ENCODE measurements at regions of chr10 and their contacts with region 1.

Region 1: DNA sequence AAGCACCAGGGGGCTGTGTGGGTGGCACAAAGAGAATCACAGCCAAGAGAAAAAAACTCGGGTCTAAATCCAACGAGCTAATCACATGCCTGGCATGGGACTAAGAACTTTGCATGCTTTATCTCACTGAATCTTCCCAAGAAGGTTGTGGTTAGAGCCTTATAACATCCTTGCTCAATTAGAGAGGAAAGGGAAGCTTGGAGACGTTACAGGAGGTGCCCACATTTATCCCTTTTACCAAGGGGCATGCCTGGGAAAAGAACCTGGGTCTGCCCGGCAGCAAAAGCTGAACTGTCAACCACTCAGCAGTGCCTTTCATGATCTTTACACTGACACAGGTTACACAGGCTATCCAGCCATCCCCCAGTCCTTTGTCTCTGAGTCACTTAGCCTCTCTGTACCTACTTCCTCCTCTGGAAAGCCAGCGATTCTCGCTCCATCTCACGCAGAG is 190.1 kb downstream of the PRPF18 start:
- DNase-seq: no peak
- H3K4me3 Mint-ChIP-seq: no peak overlapping the region
- H3K27ac Mint-ChIP-seq: no peak overlapping the region
- H3K4me1 Mint-ChIP-seq: no peaks in the 10 kb centered on the region
- H3K27me3 Mint-ChIP-seq: peaks cover 18% of the 10 kb centered on the region

Region 2: GRCh38 chr10:13371897-13372470 is 404.9 kb before region 1 on chr10:
- intact Hi-C with region 1: loop called (anchors 1 kb)
- DNase-seq: peak; percentile 61
- H3K4me3 Mint-ChIP-seq: no peak overlapping the region
- H3K27ac Mint-ChIP-seq: no peak overlapping the region
- H3K4me1 Mint-ChIP-seq: no peaks in the 10 kb centered on the region
- H3K27me3 Mint-ChIP-seq: peaks cover 3% of the 10 kb centered on the region

Region 3: DNA sequence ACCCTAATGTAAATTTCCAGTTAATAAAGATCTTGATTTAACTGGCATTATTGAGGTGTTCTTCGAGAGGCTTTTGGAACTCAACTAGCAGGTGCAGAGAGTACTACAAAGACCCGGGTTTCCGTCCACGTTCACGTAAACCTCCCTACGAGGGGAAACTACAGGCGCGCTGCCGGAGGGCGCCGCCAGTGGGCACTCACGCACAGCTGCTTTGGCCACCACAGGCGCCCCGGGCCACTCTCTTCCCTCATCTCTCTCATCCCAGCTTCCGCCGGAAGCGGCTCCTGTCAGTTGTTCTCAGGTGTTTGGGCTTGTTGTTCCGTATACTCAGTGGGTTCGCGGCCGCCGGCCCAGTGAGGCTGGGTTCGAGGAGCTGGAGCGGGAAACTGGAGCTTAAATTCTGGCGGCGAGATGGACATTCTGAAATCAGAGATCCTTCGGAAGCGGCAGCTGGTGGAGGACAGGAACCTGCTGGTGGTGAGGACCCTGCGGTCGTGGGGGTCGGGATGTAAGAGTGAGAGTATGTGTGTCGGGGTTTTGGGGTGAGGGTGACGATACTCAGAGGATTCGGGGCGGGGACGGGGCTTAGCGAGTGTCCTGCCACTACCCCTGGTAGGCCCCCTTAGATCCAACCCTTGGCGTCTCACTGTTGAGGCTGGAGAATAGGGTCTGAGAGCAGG is 190.1 kb before region 1 on chr10 and contains the start of gene PRPF18:
- intact Hi-C with region 1: loop called (anchors 2 kb)
- DNase-seq: peak; percentile 89
- H3K4me3 Mint-ChIP-seq: peak within 1 kb of the TSS; percentile 100
- H3K27ac Mint-ChIP-seq: peak within 1 kb of the TSS; percentile 97
- H3K4me1 Mint-ChIP-seq: peaks cover 20% of the 10 kb centered on the region
- H3K27me3 Mint-ChIP-seq: peaks cover 6% of the 10 kb centered on the region
- total RNA-seq, gene PRPF18: 20.6 and 22.9 TPM in 2 replicates

Region 4: DNA sequence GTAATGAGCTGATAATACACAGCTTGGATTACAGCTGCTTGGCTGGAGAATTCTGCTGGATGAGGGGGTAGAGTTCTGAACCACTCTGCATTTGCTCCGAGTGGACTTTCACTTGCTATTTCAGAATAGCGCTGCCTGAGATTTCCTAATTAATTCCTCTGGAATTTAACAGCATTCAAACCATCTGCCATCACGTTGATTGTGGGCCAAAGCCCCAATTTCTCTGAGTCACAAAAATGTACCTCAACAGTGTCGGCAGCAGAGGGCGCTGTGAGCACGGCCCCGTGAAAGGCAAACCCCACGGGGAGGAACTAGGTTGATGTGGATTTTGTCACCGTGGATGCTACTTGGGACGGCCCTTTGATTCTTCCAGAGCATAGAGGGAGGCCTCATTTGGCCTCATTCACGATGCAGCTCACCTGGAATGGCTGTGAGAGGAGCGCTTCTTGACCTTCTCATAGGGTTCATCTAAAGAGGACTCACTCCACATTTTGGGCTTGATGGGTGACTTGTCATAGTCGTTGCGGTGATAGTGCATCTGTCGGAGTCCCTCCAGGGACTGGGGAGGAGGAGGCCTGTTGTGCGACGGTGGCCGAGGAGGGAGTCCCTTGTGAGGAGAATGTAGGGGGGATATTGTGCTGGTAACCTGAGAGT is 116.9 kb before region 1 on chr10:
- intact Hi-C with region 1: loop called (anchors 1 kb)
- DNase-seq: peak; percentile 50
- H3K4me3 Mint-ChIP-seq: no peak overlapping the region
- H3K27ac Mint-ChIP-seq: no peak overlapping the region
- H3K4me1 Mint-ChIP-seq: peaks cover 4% of the 10 kb centered on the region
- H3K27me3 Mint-ChIP-seq: no peaks in the 10 kb centered on the region

Region 5: GRCh38 chr10:13758312-13758711 is 18.6 kb before region 1 on chr10:
- intact Hi-C with region 1: no loop called
- DNase-seq: no peak
- H3K4me3 Mint-ChIP-seq: no peak overlapping the region
- H3K27ac Mint-ChIP-seq: no peak overlapping the region
- H3K4me1 Mint-ChIP-seq: peaks cover 9% of the 10 kb centered on the region
- H3K27me3 Mint-ChIP-seq: peaks cover 22% of the 10 kb centered on the region

Region 6: GRCh38 chr10:13877154-13877909 is 100.4 kb after region 1 on chr10:
- intact Hi-C with region 1: no loop called
- DNase-seq: no peak
- H3K4me3 Mint-ChIP-seq: no peak overlapping the region
- H3K27ac Mint-ChIP-seq: no peak overlapping the region
- H3K4me1 Mint-ChIP-seq: no peaks in the 10 kb centered on the region
- H3K27me3 Mint-ChIP-seq: peaks cover 4% of the 10 kb centered on the region

Measured in activated T-helper 2 cell treated with anti-CD3 and anti-CD28 coated beads, Interferon-gamma antibody, Interleukin-2, Interleukin-4, amounts not matched to agents 10 μg/mL and 5 μg/mL and 100 μg/mL, durations not matched to agents 14 hours and 24 hours and 36 hours (primary cell).